ENCODE measurements at regions of chr15 and their contacts with region 1.

Region 1: DNA sequence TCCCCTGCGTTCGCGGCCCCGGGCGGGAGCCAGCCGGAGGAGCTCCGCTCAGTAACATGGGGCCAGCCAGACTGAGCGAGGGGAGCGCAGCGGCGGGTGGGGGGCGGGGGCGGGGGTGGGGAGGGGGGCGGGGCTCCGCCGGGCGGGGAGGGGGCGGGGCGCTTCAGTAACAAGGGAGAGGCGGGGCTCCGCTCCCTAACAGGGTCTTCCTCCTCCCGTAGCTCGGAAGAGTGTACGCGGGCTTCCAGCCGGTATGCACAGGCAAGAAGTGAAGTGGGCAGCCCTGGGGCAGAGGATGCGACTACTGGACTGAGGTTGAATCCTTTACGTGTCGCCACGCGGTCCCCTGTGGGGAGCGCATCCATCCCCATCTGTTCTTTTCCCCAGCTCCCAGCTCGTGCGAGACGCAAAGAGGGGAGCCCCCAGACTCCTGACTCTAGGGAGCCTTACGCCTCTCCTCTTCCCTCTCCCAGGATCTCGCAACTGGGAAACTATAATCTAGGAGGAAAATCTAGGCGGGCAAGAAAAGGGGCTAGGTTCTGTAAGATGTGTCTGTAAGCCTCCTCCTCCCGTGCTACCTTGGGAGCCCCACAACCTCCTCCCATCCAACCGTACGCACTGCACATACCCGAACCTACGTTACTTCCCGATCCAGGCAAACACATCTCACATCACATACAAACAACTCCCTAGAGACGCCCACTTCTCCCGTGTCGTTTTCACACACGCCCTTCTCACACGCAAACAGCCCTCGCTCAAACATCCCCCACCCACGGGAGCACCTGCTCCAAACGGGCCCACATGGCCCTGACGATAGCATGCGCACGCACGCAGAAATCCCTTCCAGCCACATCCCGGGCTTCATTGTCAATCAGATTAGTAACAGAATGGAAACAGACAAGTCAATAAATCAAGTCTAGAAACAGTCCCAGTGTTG is at the start of gene SHF:
- DNase-seq: peak; percentile 91
- H3K4me3 ChIP-seq: peak within 1 kb of the TSS; percentile 68 to 92 (median 88)
- H3K27ac ChIP-seq: peak within 1 kb of the TSS; percentile 89 to 93 (median 90)
- H3K4me1 ChIP-seq: peaks cover 0 to 45% (median 35%) of the 10 kb centered on the region in 4 donors
- H3K27me3 ChIP-seq: no peaks in the 10 kb centered on the region
- CTCF ChIP-seq: no peak
- EP300 ChIP-seq: peak in 1 of 4 donors; percentile 7
- POLR2A ChIP-seq: peak in 1 of 2 donors; percentile 33
- total RNA-seq, gene SHF: 10.6 to 28.5 (median 17.9) TPM

Region 2: GRCh38 chr15:44711356-44712107 is 476.6 kb before region 1 on chr15 and contains the start of gene B2M:
- intact Hi-C with region 1: loop called (anchors 10 kb)
- DNase-seq: peak; percentile 98
- H3K4me3 ChIP-seq: peak within 1 kb of the TSS; percentile 72 to 91 (median 84)
- H3K27ac ChIP-seq: peak within 1 kb of the TSS; percentile 96 to 99 (median 98)
- H3K4me1 ChIP-seq: peaks cover 0 to 42% (median 24%) of the 10 kb centered on the region in 4 donors
- H3K27me3 ChIP-seq: no peaks in the 10 kb centered on the region
- CTCF ChIP-seq: no peak
- EP300 ChIP-seq: no peak
- POLR2A ChIP-seq: peak; percentile 100
- total RNA-seq, gene B2M: 1,906 to 2,799 (median 2,534) TPM

Region 3: DNA sequence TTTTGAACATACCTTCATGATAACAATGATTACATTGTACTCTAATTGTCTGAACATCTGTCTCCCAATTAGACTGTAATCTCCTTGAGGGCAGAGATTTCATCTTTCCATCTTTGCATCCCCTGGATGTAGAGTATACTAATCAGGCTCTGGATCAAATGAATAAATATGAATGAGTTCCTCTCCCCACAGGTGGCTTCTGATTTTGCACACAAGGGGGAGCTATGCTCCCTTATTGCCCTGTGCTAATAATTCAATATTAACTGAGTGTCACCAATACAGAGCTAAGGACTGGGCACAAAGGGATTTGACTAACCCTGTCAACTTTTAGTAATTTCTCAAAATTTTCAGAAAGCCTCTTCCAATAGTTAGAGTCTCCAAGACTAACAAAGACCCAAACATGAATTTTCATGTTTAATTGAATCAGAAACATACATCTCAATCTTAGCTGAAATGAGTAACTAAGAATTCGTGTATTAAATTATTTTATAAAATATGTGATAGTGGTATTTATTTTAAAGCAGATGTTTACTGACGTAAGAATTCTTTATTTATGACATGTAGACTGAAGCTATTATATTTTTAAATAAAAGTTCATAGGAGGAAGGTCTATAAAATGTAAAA is 61.5 kb before region 1 on chr15:
- intact Hi-C with region 1: no loop called
- DNase-seq: no peak
- H3K4me3 ChIP-seq: no peak overlapping the region
- H3K27ac ChIP-seq: no peak overlapping the region
- H3K4me1 ChIP-seq: peaks cover 0 to 16% (median 13%) of the 10 kb centered on the region in 4 donors
- H3K27me3 ChIP-seq: peaks cover 20 to 70% (median 32%) of the 10 kb centered on the region in 3 donors
- CTCF ChIP-seq: peak in 1 of 4 experiments; percentile 38
- EP300 ChIP-seq: no peak
- POLR2A ChIP-seq: no peak